Head of caudate nucleus (tissue), 42 donors: ENCODE measurements at regions of chr17 and their contacts with region 1.

Region 1: GRCh38 chr17:28951991-28952975 is 965 bp upstream of the PHF12 start:
- DNase-seq: peak; percentile 93 to 100 (median 99)

Region 2: GRCh38 chr17:28902819-28903545 is 49.3 kb before region 1 on chr17 and contains the start of gene DHRS13:
- intact Hi-C with region 1: loop called (anchors 5 kb)
- DNase-seq: peak in 41 of 42 donors; percentile 52 to 93 (median 85)